ENCODE measurements at regions of chr1 and their contacts with region 1.

Region 1: DNA sequence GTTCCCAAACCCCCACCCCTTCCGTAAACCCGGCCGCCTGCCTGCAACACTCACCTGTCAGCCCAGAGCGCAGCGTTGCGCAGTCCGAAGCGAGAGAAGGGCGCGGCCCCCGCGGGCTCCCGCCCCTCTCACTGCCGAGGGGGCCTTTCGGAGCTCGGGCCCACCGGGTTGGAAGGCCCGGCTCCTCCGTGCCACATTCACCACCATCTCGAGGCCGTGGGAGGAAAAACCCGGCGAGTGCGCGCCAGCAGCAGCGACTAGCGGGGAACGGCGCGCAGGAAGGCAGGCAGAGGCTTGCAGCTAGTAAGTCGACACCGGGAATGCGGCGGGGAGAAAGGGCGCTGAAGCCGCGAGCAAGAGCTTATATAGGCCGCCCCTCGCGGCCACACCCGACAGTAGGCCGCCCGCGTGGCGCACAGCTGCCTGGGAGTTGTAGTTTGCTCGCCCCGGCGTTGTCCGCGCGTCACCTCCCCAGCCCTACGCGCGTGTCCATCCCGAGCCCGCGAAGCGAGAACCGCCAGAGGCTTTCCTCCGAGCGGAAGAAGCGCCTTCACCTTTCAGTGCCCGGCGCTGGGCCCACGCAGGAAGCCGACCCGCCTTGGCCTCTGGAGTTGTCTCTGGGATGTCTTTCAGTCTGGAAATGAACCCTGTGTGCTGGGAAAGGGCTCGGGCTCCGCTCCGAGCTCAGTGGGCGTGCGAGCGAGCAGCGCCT is 10.4 kb upstream of the RAB42 start:
- DNase-seq: peak; percentile 85 to 97
- H3K4me3 ChIP-seq: peak overlapping the region; percentile 77 to 86
- H3K27ac ChIP-seq: peak overlapping the region; percentile 91 to 92
- H3K4me1 ChIP-seq: peaks cover 8 to 14% of the 10 kb centered on the region in 2 donors
- H3K27me3 ChIP-seq: no peaks in the 10 kb centered on the region
- CTCF ChIP-seq: peak in 1 of 3 experiments; percentile 35

Region 2: DNA sequence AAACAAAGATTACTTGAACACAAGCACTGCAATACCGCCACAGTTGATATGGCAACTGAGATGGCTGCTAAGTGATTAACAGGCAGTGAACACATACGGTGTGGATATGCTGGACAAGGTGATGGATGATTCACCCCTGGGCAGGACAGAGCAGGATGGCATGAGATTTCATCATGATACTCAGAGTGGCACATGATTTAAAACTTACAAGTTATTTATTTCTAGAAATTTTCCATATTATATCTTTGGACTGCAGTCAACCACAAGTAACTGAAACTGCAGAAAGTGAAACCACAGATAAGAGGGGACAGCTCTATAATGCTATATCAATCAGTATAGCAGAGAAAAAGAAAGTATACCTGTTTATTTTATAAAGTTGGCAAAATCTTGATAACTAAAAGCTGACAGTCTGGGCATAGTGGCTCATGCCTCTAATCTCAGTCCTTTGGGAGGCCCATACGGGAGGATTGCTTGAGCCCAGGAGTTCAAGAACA is 164.2 kb before region 1 on chr1:
- intact Hi-C with region 1: no loop called
- DNase-seq: no peak
- H3K4me3 ChIP-seq: no peak overlapping the region
- H3K27ac ChIP-seq: no peak overlapping the region
- H3K4me1 ChIP-seq: no peaks in the 10 kb centered on the region
- H3K27me3 ChIP-seq: no peaks in the 10 kb centered on the region
- CTCF ChIP-seq: no peak

Region 3: GRCh38 chr1:28552758-28553663 is 28.7 kb before region 1 on chr1 and contains the start of gene TRNAU1AP:
- intact Hi-C with region 1: loop called (anchors 1 kb)
- DNase-seq: peak; percentile 83 to 97
- H3K4me3 ChIP-seq: peak within 1 kb of the TSS; percentile 64 to 90
- H3K27ac ChIP-seq: peak within 1 kb of the TSS; percentile 77 to 85
- H3K4me1 ChIP-seq: peaks cover 0 to 10% of the 10 kb centered on the region in 2 donors
- H3K27me3 ChIP-seq: no peaks in the 10 kb centered on the region
- CTCF ChIP-seq: no peak
- total RNA-seq, gene TRNAU1AP: 11.0 TPM